ENCODE measurements at regions of chr6 and their contacts with region 1.

Region 1: GRCh38 chr6:77962070-77962469 is 309.2 kb downstream of the MEI4 start:
- DNase-seq: no peak
- H3K4me3 ChIP-seq: no peak overlapping the region
- H3K27ac ChIP-seq: no peak overlapping the region
- H3K4me1 ChIP-seq: no peaks in the 10 kb centered on the region
- H3K27me3 ChIP-seq: no peaks in the 10 kb centered on the region
- CTCF ChIP-seq: no peak

Region 2: GRCh38 chr6:77415706-77416105 is 546.4 kb before region 1 on chr6:
- CTCF ChIA-PET with region 1: no interaction called
- POLR2A ChIA-PET with region 1: no interaction called
- intact Hi-C with region 1: no loop called
- DNase-seq: no peak
- H3K4me3 ChIP-seq: no peak overlapping the region
- H3K27ac ChIP-seq: no peak overlapping the region
- H3K4me1 ChIP-seq: no peaks in the 10 kb centered on the region
- H3K27me3 ChIP-seq: no peaks in the 10 kb centered on the region
- CTCF ChIP-seq: no peak

Region 3: DNA sequence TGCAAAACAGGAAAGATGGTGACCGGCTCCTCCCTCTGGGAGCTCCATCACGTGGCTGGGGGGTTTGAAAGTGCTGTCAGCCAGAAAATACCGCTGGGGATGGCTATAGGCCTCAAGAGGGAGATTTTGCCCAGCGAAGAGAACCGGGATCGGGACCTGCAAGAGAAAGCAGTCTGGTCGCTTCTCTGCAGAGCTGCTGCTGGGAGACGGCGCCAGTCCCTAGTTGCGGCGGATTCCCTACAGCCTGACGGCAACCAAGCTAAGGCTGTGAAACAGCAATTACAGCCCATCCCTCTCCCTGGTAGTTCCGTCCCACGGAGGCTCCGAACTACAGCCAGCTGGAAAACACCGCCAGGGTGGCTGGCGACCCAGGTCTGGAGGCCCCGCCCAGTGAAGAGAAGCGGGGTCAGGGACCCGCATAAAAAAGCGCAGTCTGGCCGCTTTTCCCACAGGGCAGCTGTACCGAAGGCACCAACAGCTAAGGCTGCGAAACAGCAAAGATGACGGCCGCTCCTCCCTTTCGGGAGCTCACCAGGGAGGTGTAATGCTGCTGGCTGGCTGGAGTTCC is 667.2 kb after region 1 on chr6:
- CTCF ChIA-PET with region 1: interaction called, 12 read pairs
- POLR2A ChIA-PET with region 1: no interaction called
- intact Hi-C with region 1: no loop called
- DNase-seq: no peak
- H3K4me3 ChIP-seq: no peak overlapping the region
- H3K27ac ChIP-seq: no peak overlapping the region
- H3K4me1 ChIP-seq: no peaks in the 10 kb centered on the region
- H3K27me3 ChIP-seq: no peaks in the 10 kb centered on the region
- CTCF ChIP-seq: no peak

Measured in PC-9 (cell line).